T-cell (primary cell): ENCODE measurements at regions of chr1 and their contacts with region 1.

Region 1: GRCh38 chr1:89692601-89693521 is 59.9 kb downstream of the LRRC8C start:
- DNase-seq: no peak
- ATAC-seq: no peak
- H3K4me3 ChIP-seq: no peak overlapping the region
- H3K4me3 Mint-ChIP-seq: peak overlapping the region in 1 of 3 donors; percentile 46
- H3K27ac ChIP-seq: peak overlapping the region; percentile 15
- H3K27ac Mint-ChIP-seq: peak overlapping the region; percentile 77 to 79
- H3K4me1 ChIP-seq: peaks cover 26 to 37% of the 10 kb centered on the region in 2 experiments
- H3K4me1 Mint-ChIP-seq: peaks cover 91 to 94% (median 92%) of the 10 kb centered on the region in 3 donors
- H3K27me3 ChIP-seq: no peaks in the 10 kb centered on the region
- H3K27me3 Mint-ChIP-seq: no peaks in the 10 kb centered on the region

Region 2: GRCh38 chr1:89706700-89707012 is 13.8 kb after region 1 on chr1:
- CTCF ChIA-PET with region 1: interaction called, 4 to 7 read pairs
- POLR2A ChIA-PET with region 1: interaction called in 1 of 2 experiments, 15 read pairs
- DNase-seq: no peak
- ATAC-seq: no peak
- H3K4me3 ChIP-seq: no peak overlapping the region
- H3K4me3 Mint-ChIP-seq: no peak overlapping the region
- H3K27ac ChIP-seq: no peak overlapping the region
- H3K27ac Mint-ChIP-seq: peak overlapping the region; percentile 11 to 23
- H3K4me1 ChIP-seq: peaks cover 0 to 4% of the 10 kb centered on the region in 2 experiments
- H3K4me1 Mint-ChIP-seq: peaks cover 29 to 61% (median 41%) of the 10 kb centered on the region in 3 donors
- H3K27me3 ChIP-seq: no peaks in the 10 kb centered on the region
- H3K27me3 Mint-ChIP-seq: no peaks in the 10 kb centered on the region

Region 3: DNA sequence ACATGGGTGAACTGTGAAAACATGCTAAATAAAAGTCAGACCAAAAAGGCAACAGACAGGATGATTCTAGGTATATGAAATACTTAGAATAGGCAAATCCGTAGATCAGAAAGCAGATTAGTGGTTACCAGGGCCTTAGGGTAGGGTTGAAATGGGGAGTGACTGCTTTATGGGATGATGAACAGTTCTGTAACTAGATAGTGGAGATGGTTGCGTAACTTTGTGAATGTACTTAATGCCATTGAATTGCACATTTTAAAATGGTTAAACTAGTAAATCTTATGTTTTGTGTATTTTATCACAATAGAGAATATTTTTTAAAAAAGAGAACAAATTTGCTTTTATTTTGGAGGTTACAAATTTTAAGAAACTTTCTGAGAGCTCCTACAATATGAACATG is 319.4 kb after region 1 on chr1:
- CTCF ChIA-PET with region 1: no interaction called
- POLR2A ChIA-PET with region 1: no interaction called
- DNase-seq: no peak
- ATAC-seq: no peak
- H3K4me3 ChIP-seq: no peak overlapping the region
- H3K4me3 Mint-ChIP-seq: no peak overlapping the region
- H3K27ac ChIP-seq: no peak overlapping the region
- H3K27ac Mint-ChIP-seq: no peak overlapping the region
- H3K4me1 ChIP-seq: no peaks in the 10 kb centered on the region
- H3K4me1 Mint-ChIP-seq: peaks cover 0 to 16% (median 13%) of the 10 kb centered on the region in 3 donors
- H3K27me3 ChIP-seq: no peaks in the 10 kb centered on the region
- H3K27me3 Mint-ChIP-seq: no peaks in the 10 kb centered on the region